ENCODE measurements at regions of chr5 and their contacts with region 1.

Region 1: GRCh38 chr5:127040796-127041520 is 10.6 kb upstream of the MARCHF3 start:
- DNase-seq: peak in 1 of 5 donors; percentile 26
- ATAC-seq: peak; percentile 44 to 68 (median 62)
- H3K4me3 ChIP-seq: peak overlapping the region in 4 of 12 donors; percentile 0 to 7 (median 2)
- H3K27ac ChIP-seq: peak overlapping the region in 11 of 12 donors; percentile 24 to 70 (median 40)
- H3K4me1 ChIP-seq: peaks cover 0 to 34% (median 22%) of the 10 kb centered on the region in 12 donors
- H3K27me3 ChIP-seq: no peaks in the 10 kb centered on the region
- CTCF ChIP-seq: no peak
- POLR2A ChIP-seq: no peak

Region 2: DNA sequence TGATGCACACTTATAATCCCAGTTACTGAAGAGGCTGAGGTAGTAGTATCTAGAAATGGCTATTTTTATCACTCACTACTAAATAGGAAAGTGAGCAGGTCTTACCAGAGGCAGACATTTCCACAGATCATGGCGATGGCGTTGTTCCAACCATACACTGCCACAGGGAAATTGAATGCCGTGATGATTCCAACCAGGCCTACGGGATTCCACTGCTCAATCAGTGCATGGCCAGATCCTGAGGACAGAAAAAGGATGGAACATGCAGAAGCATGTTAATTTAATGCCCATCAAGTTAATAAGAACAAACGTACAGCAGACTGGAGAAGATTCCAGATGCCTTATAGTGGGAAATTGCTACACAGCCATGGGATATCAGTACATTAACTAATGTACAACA is 464.0 kb before region 1 on chr5:
- intact Hi-C with region 1: no loop called
- DNase-seq: no peak
- ATAC-seq: no peak
- H3K4me3 ChIP-seq: no peak overlapping the region
- H3K27ac ChIP-seq: no peak overlapping the region
- H3K4me1 ChIP-seq: no peaks in the 10 kb centered on the region
- H3K27me3 ChIP-seq: no peaks in the 10 kb centered on the region
- CTCF ChIP-seq: no peak
- POLR2A ChIP-seq: no peak

Region 3: DNA sequence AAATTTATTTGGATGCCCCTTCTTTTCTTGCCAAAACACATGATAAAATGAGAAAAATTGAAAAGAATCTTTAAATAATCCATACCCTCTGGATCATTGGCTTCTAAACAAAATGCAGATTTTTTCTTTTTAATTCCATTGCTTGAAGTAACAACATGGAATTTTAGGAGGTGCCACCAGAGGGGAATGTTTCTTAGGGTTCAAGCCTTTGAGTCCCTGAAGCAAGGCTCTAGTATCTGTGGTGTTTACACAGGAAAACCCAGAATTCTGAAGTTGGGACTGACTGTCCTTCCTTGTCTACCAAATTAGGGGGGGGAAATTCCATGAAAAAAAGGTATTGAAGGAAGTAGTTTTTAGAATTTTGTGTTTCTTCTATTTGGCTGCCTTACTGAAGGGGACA is 194.6 kb before region 1 on chr5:
- intact Hi-C with region 1: loop called in 5 of 10 experiments (anchors 5 to 10 kb)
- DNase-seq: no peak
- ATAC-seq: no peak
- H3K4me3 ChIP-seq: no peak overlapping the region
- H3K27ac ChIP-seq: peak overlapping the region in 5 of 12 donors; percentile 13 to 71 (median 52)
- H3K4me1 ChIP-seq: peaks cover 0 to 48% (median 31%) of the 10 kb centered on the region in 12 donors
- H3K27me3 ChIP-seq: no peaks in the 10 kb centered on the region
- CTCF ChIP-seq: peak in 1 of 12 donors; percentile 13
- POLR2A ChIP-seq: no peak

Region 4: GRCh38 chr5:127079994-127080491 is 39.1 kb after region 1 on chr5:
- intact Hi-C with region 1: loop called in 1 of 10 experiments (anchors 5 kb)
- DNase-seq: no peak
- ATAC-seq: no peak
- H3K4me3 ChIP-seq: no peak overlapping the region
- H3K27ac ChIP-seq: no peak overlapping the region
- H3K4me1 ChIP-seq: peaks cover 0 to 7% (median 0%) of the 10 kb centered on the region in 12 donors
- H3K27me3 ChIP-seq: no peaks in the 10 kb centered on the region
- CTCF ChIP-seq: no peak
- POLR2A ChIP-seq: no peak